ENCODE measurements at regions of chr2 and their contacts with region 1.

Region 1: GRCh38 chr2:230007931-230008707 is 60.6 kb downstream of the SLC16A14 start:
- DNase-seq: peak; percentile 56 to 87 (median 73)
- ATAC-seq: peak; percentile 48
- H3K4me3 ChIP-seq: no peak overlapping the region
- H3K4me3 Mint-ChIP-seq: no peak overlapping the region
- H3K27ac ChIP-seq: no peak overlapping the region
- H3K27ac Mint-ChIP-seq: no peak overlapping the region
- H3K4me1 ChIP-seq: no peaks in the 10 kb centered on the region
- H3K4me1 Mint-ChIP-seq: peaks cover 3% of the 10 kb centered on the region
- H3K27me3 ChIP-seq: no peaks in the 10 kb centered on the region
- H3K27me3 Mint-ChIP-seq: no peaks in the 10 kb centered on the region
- CTCF ChIP-seq: peak; percentile 83

Region 2: GRCh38 chr2:229910832-229911412 is 97.2 kb before region 1 on chr2:
- CTCF ChIA-PET with region 1: no interaction called
- POLR2A ChIA-PET with region 1: no interaction called
- intact Hi-C with region 1: no loop called
- DNase-seq: peak in 3 of 9 experiments; percentile 14 to 62 (median 50)
- ATAC-seq: peak; percentile 75
- H3K4me3 ChIP-seq: no peak overlapping the region
- H3K4me3 Mint-ChIP-seq: no peak overlapping the region
- H3K27ac ChIP-seq: no peak overlapping the region
- H3K27ac Mint-ChIP-seq: peak overlapping the region; percentile 81
- H3K4me1 ChIP-seq: peaks cover 14% of the 10 kb centered on the region
- H3K4me1 Mint-ChIP-seq: peaks cover 62% of the 10 kb centered on the region
- H3K27me3 ChIP-seq: no peaks in the 10 kb centered on the region
- H3K27me3 Mint-ChIP-seq: no peaks in the 10 kb centered on the region
- CTCF ChIP-seq: peak; percentile 44

Region 3: DNA sequence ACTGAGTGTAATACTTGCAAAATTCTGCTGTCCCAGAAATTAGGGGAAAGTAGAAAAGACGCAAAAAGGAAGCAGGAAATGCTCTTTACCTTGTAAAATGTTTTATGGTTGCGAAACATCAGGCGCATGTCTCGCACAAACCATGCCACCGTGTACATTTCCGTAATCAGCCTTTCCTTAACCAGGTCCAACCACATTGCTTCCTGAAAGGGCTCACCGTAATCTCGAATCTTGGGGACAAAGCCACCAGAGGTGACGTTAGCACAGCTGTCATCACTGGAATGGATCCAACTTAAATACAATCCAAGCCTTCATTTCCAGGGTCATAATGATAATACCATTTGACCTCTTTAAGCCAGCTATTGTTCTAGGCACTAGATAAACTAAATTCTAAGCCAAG is 162.4 kb after region 1 on chr2:
- CTCF ChIA-PET with region 1: no interaction called
- POLR2A ChIA-PET with region 1: no interaction called
- intact Hi-C with region 1: no loop called
- DNase-seq: peak in 2 of 9 experiments; percentile 26 to 47
- ATAC-seq: peak; percentile 54
- H3K4me3 ChIP-seq: no peak overlapping the region
- H3K4me3 Mint-ChIP-seq: peak overlapping the region; percentile 42
- H3K27ac ChIP-seq: peak overlapping the region in 1 of 2 experiments; percentile 44
- H3K27ac Mint-ChIP-seq: peak overlapping the region; percentile 87
- H3K4me1 ChIP-seq: peaks cover 8% of the 10 kb centered on the region
- H3K4me1 Mint-ChIP-seq: peaks cover 11% of the 10 kb centered on the region
- H3K27me3 ChIP-seq: no peaks in the 10 kb centered on the region
- H3K27me3 Mint-ChIP-seq: no peaks in the 10 kb centered on the region
- CTCF ChIP-seq: no peak

Region 4: DNA sequence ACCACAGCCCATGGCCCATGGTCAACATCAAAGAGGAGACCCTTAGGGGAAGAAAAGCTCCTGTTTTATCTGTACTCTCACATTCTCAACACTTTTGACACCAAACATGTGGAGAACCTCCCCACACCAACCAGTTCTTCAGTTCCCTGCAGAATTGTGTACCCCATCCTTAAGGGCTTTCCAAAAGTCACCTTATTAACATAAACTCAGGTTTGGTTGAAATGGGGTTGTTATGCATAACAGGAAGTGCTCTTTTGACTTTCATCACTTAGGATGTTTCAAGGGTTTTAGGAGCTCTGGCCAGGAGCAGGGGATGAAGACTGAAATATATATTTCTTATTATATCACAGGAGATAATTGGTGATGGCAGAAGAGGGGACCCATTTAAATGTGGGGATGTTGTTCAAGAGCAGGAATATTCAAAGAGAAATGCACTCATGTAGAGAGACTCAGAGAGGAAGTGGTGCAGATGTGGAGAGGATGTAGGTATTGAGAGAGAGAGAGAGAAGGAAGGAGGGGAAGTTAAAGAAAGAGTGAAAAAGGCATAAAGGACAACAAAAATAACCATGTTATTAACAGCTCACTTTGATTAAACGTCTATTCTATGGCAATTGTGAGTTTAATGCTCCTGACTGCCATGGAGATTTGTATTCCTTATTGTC is 354.0 kb after region 1 on chr2:
- CTCF ChIA-PET with region 1: no interaction called
- POLR2A ChIA-PET with region 1: no interaction called
- intact Hi-C with region 1: loop called in 1 of 2 experiments (anchors 10 kb)
- DNase-seq: peak in 1 of 9 experiments; percentile 17
- ATAC-seq: peak; percentile 31
- H3K4me3 ChIP-seq: no peak overlapping the region
- H3K4me3 Mint-ChIP-seq: peak overlapping the region; percentile 17
- H3K27ac ChIP-seq: peak overlapping the region in 1 of 2 experiments; percentile 71
- H3K27ac Mint-ChIP-seq: peak overlapping the region; percentile 78
- H3K4me1 ChIP-seq: peaks cover 19% of the 10 kb centered on the region
- H3K4me1 Mint-ChIP-seq: peaks cover 41% of the 10 kb centered on the region
- H3K27me3 ChIP-seq: no peaks in the 10 kb centered on the region
- H3K27me3 Mint-ChIP-seq: no peaks in the 10 kb centered on the region
- CTCF ChIP-seq: no peak

Region 5: GRCh38 chr2:230814616-230815015 is 806.5 kb after region 1 on chr2:
- CTCF ChIA-PET with region 1: no interaction called
- POLR2A ChIA-PET with region 1: no interaction called
- intact Hi-C with region 1: loop called in 1 of 2 experiments (anchors 5 kb)
- DNase-seq: peak in 1 of 9 experiments; percentile 33
- ATAC-seq: no peak
- H3K4me3 ChIP-seq: no peak overlapping the region
- H3K4me3 Mint-ChIP-seq: no peak overlapping the region
- H3K27ac ChIP-seq: no peak overlapping the region
- H3K27ac Mint-ChIP-seq: peak overlapping the region; percentile 80
- H3K4me1 ChIP-seq: no peaks in the 10 kb centered on the region
- H3K4me1 Mint-ChIP-seq: peaks cover 14% of the 10 kb centered on the region
- H3K27me3 ChIP-seq: no peaks in the 10 kb centered on the region
- H3K27me3 Mint-ChIP-seq: no peaks in the 10 kb centered on the region
- CTCF ChIP-seq: no peak

Region 6: DNA sequence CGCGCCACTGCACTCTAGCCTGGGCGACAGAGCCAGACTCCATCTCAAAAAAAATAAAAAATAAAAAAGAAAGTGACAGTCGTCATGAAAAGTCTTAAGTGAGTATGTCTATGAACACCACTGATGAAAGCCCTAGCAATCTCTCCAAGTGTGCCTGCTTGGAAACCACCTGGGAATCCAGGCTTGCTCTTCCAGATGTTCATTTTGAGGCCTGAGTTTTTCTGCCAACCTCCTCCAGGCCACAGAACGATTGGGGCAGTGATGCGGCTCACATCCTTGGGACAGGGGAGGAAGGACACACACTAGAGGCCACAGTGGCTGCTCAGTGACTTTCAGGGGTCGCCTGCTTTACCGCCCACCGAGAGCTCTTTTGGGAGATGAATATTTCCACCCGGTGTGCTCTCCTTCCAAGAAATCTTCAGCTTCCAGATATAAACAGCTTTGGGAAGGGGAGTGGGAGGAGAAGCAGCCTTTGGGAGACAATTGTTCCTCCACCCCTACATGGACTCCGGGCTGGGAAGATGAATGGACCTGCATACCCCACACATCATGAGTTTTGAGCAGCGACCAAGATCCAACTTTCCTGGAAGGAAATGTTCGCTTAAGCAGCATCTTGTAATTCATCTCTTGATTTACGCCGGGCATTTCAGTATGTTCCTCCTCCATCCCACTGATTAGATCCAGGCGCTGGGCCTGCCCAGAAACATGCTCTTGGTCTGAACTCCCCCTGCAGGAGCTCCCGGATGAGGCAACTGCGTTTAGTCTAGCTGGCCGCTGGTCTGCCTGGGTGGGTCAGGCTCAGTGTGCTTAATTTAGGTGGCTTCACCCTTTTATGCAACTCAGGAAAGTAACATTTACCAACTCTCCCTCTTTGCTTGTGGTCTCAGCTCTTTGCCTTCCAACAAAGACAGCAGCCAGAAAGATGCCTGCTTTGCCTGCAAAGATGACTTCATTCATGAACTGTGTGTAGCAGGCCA is 1184.1 kb after region 1 on chr2:
- CTCF ChIA-PET with region 1: no interaction called
- POLR2A ChIA-PET with region 1: no interaction called
- intact Hi-C with region 1: no loop called
- DNase-seq: no peak
- ATAC-seq: no peak
- H3K4me3 ChIP-seq: no peak overlapping the region
- H3K4me3 Mint-ChIP-seq: no peak overlapping the region
- H3K27ac ChIP-seq: no peak overlapping the region
- H3K27ac Mint-ChIP-seq: no peak overlapping the region
- H3K4me1 ChIP-seq: no peaks in the 10 kb centered on the region
- H3K4me1 Mint-ChIP-seq: no peaks in the 10 kb centered on the region
- H3K27me3 ChIP-seq: peaks cover 3 to 5% of the 10 kb centered on the region in 2 experiments
- H3K27me3 Mint-ChIP-seq: peaks cover 22% of the 10 kb centered on the region
- CTCF ChIP-seq: no peak